ENCODE measurements at regions of chr2 and their contacts with region 1.

Region 1: DNA sequence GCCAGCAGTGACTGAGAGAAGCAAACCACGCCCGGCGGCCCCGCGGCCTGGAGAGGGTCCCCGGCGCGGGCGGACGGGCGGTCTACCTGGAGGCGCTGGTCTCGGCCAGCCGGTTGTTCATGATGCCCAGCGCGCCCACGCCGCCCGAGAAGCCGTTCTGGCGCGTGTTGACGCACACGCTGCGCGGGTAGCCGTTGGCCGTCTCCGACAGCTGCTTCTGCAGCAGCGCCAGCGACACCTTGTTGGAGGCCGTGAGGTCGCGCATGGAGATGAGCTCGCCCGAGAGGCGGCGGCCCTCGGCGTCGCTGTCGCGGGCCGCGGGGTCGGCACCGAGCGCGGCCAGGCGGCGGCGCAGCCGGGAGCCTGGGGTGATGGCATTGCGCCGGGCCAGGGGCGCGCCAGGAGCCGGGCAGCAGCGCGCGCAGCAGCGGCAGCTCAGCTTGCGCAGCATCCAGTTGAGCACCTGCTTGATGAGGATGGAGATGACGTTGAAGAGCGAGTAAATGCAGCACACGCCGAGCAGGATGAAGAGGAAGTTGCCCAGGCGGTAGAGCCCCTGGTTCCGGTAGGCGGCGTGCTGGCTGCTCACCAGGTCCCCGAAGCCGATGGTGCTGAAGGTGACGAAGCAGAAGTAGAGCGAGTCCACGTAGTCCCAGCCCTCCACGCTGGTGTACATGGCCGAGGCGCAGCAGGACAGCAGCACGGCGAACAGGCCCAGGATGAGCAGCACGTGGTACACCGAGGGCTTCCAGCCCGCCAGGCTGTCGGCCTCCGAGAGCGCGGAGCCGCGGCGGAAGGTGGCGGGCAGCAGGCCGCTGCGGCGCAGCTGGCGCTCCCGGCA is 118.1 kb downstream of the MSH2 start:
- DNase-seq: peak; percentile 29 to 51
- ATAC-seq: peak; percentile 53 to 80 (median 72)
- H3K4me3 ChIP-seq: peak overlapping the region in 9 of 10 donors; percentile 24 to 59 (median 46)
- H3K27ac ChIP-seq: peak overlapping the region in 1 of 10 donors; percentile 76
- H3K4me1 ChIP-seq: peaks cover 0 to 15% (median 3%) of the 10 kb centered on the region in 9 donors
- H3K27me3 ChIP-seq: peaks cover 0 to 19% (median 7%) of the 10 kb centered on the region in 7 donors
- CTCF ChIP-seq: peak in 4 of 9 donors; percentile 26 to 39 (median 32)

Region 2: DNA sequence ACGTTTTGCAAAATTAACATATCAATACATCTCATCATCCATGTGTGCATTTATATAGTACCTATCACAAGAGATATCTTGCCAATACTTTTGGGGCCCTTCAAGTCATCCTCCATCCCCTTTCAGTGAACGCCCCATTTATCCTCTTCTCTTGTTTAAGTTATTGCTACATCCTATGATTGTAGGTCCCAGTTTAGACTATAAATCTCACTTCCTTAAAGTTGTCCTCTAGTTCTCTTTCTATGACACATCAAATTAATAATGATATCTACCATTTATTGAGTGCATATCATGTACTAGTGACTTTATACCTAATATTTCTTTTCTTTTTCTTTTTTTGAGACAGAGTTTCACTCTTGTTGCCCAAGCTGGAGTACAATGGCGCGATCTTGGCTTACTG is 414.0 kb after region 1 on chr2:
- intact Hi-C with region 1: loop called in 1 of 10 experiments (anchors 5 kb)
- DNase-seq: no peak
- ATAC-seq: no peak
- H3K4me3 ChIP-seq: no peak overlapping the region
- H3K27ac ChIP-seq: no peak overlapping the region
- H3K4me1 ChIP-seq: no peaks in the 10 kb centered on the region
- H3K27me3 ChIP-seq: no peaks in the 10 kb centered on the region
- CTCF ChIP-seq: no peak